ENCODE measurements at regions of chr14 and their contacts with region 1.

Region 1: GRCh38 chr14:65949711-65950516 is 536.3 kb upstream of the CCDC196 start:
- DNase-seq: peak; percentile 73
- H3K4me3 Mint-ChIP-seq: no peak overlapping the region
- H3K27ac Mint-ChIP-seq: peak overlapping the region; percentile 84
- H3K4me1 Mint-ChIP-seq: peaks cover 35% of the 10 kb centered on the region
- H3K27me3 Mint-ChIP-seq: peaks cover 9% of the 10 kb centered on the region

Region 2: DNA sequence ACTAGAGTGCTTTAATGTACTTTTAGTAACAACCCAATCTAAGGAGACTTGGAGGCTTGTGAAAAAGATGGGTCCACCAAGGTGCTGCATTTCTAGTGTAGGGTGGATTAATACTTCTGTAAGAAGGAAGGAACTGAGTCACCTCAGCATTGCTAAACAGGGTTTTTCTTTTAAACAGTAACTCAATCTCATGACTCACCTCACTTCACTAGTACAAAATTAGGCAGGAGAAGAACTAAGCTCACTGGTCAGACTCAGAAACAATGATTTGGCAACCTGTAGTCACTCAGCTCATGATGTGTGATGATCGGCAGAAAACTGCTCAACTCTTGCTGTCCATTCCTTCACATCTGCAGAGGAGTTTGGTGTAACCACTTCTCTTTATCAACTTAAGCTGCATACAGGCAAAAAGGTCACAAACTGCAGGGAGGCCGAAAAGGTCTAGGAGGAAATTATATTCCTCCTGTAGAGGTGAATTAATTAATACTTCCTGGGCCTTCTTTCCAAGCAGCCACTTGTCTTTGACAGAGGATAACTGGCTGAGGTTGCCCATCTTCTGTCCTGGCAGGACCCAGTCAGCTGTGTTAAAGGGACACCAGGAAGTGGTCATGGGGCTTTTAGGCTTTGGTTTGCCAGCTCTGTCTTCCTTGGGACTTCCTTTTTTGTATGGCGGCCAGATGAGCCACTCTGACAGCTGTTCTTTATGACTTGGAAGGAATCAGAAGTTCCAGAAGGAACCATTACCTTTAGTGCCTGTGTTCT is 70.5 kb before region 1 on chr14:
- CTCF ChIA-PET with region 1: no interaction called
- POLR2A ChIA-PET with region 1: no interaction called
- intact Hi-C with region 1: loop called (anchors 5 kb)
- DNase-seq: peak; percentile 15
- H3K4me3 Mint-ChIP-seq: no peak overlapping the region
- H3K27ac Mint-ChIP-seq: peak overlapping the region; percentile 71
- H3K4me1 Mint-ChIP-seq: peaks cover 44% of the 10 kb centered on the region
- H3K27me3 Mint-ChIP-seq: no peaks in the 10 kb centered on the region

Region 3: DNA sequence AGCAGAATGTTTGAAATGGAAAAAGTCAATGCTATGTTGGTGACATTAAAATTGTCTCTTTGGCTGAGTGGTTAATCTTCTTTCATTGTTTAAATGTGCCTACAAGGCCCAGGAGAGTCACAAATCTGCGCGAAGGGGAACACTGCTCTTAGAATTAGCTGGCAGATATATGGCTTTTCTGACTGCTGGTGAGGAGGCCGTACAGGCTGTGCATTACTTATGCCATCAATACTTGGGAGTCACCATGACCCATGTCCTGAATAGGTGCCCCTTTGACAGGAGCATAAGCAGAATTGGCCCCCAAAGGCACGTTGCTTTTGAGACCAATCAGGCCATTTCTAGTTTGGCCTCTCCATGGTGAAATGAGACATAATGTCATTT is 15.8 kb before region 1 on chr14:
- CTCF ChIA-PET with region 1: no interaction called
- POLR2A ChIA-PET with region 1: no interaction called
- intact Hi-C with region 1: no loop called
- DNase-seq: no peak
- H3K4me3 Mint-ChIP-seq: no peak overlapping the region
- H3K27ac Mint-ChIP-seq: no peak overlapping the region
- H3K4me1 Mint-ChIP-seq: peaks cover 35% of the 10 kb centered on the region
- H3K27me3 Mint-ChIP-seq: no peaks in the 10 kb centered on the region

Region 4: GRCh38 chr14:65981192-65981843 is 31.4 kb after region 1 on chr14:
- CTCF ChIA-PET with region 1: no interaction called
- POLR2A ChIA-PET with region 1: no interaction called
- intact Hi-C with region 1: no loop called
- DNase-seq: no peak
- H3K4me3 Mint-ChIP-seq: no peak overlapping the region
- H3K27ac Mint-ChIP-seq: no peak overlapping the region
- H3K4me1 Mint-ChIP-seq: peaks cover 3% of the 10 kb centered on the region
- H3K27me3 Mint-ChIP-seq: no peaks in the 10 kb centered on the region